ENCODE measurements at regions of chr16 and their contacts with region 1.

Region 1: DNA sequence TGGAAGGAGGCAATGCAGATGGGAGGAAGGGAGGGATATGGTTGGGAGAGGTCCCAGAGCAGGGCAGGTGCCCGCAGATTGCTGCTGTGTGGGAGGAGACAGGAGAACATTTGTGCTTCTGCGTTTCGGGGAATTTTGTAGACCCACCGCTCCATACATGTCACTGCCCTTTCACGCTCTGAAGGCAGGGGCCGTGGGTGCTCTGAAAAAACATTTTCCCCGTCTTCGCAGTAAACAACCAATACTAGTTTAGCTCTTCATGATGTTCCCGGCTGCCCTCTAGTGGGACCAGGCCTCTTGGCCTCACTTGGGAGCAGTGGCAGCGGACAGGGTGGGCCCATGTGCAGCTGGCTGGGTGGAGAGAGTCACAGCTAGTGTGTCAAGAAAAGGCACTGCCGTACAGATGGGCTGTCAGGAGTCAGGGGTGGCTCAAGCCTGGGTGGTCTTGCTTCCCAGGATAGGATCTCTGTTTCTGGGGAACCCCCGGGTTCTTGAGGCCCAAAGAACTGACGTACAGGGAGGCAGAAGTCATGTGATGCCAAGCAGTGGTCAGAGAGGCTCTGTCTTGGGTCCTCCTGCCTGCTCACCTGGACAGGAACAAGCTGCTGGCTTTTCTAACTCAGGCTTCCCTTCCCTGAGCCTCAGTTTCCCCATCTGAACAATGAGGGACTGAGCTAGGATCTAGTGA is 46.5 kb upstream of the CPNE2 start:
- DNase-seq: peak; percentile 71
- ATAC-seq: peak; percentile 95
- H3K4me3 ChIP-seq: peak overlapping the region in 1 of 3 experiments; percentile 59; a peak in 3 of 6 replicates
- H3K27ac ChIP-seq: no peak overlapping the region
- H3K4me1 ChIP-seq: peaks cover 13% of the 10 kb centered on the region
- H3K27me3 ChIP-seq: no peaks in the 10 kb centered on the region; a peak in 2 of 5 replicates
- CTCF ChIP-seq: peak; percentile 95
- EP300 ChIP-seq: no peak
- POLR2A ChIP-seq: no peak
- RAD21 ChIP-seq: peak; percentile 83

Region 2: DNA sequence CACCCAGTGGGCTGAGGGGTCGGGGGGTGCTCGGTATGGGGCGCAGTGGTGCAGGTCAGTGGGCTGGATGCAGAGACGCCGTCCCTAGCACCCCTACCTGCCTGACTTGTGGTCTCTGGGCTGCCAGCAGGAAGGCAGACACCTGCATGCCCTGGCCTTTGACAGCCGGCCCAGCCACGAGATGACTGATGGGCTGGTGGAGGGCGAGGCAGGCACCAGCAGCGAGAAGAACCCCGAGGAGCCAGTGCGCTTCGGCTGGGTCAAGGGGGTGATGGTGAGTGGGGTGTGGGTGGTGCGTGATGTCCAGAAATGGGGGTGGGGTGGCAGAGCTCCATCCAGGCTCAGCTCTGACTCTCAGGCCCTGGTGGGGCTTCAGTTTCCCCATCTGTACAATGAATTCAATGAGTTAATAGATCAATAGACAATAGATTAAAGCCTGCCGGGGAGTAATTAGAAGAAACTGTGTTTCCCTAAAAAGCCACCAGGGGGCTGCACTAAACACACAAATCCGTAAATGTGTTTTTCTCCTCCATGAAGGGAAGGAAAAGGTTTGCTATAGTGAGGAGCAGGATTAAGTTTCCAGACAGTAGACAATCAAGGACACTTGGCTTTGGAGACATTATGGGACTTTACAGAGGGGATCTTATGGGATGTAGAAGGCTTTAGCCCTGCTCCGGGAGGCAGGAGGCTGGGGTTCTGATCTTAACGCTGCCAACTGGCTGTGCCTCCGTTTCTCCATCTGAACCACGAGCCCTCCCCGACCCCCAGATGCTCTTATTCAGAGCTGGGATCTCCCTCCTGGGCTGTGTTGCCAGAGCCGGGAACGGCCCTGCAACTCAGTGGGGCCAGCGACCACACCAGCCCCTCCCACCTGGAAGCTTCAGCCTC is 178.7 kb before region 1 on chr16:
- CTCF ChIA-PET with region 1: no interaction called
- POLR2A ChIA-PET with region 1: no interaction called
- in situ Hi-C with region 1: no loop called
- intact Hi-C with region 1: loop called (anchors 1 kb)
- DNase-seq: peak; percentile 70
- ATAC-seq: peak; percentile 6; the same call in 1 of the 3 replicates
- H3K4me3 ChIP-seq: peak overlapping the region in 2 of 3 experiments; percentile 29 to 50; a peak in 4 of 6 replicates
- H3K27ac ChIP-seq: no peak overlapping the region
- H3K4me1 ChIP-seq: peaks cover 56% of the 10 kb centered on the region
- H3K27me3 ChIP-seq: no peaks in the 10 kb centered on the region
- CTCF ChIP-seq: peak; percentile 74
- EP300 ChIP-seq: no peak
- POLR2A ChIP-seq: no peak
- RAD21 ChIP-seq: peak; percentile 59

Region 3: DNA sequence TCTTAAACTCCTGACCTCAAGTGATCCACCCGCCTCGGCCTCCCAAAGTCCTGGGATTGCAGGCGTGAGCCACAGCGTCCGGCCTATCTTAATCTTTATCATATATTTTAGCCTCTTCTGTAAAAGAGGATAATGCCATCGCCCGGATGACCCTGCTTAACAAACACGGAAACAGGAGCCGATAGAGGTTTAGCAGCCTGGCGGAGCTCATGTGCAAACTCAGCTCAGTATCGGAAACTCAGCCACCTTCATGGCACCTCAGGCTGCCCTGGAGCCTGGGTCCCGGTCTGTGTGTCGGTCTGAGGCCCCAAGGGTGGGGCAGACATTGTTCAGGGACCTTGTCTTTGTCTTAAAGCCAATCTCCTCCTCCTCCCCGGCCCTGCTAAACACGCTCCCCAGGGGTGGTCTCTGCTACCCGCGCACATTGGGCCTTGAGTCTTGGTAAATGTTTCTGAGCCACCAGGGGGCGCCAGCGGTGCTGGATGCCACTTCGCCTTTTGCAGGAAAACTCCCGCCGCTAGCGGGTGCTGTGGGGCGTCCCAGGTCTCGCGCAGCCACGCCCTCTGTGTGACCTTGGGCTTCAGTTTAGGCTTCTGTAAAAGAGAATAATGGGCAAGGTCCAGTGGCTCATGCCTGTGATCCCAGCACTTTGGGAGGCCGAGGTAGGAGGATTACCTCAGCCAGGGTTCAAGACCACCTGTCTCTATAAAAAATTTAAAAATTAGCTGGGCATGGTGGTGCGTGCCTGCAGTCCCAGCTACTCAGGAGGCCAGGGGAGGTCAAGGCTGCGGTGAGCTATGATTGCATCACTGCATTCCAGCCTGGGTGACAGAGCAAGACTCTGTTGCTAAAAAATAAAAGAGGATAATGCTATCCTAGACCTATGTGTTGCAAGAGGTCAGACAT is 81.3 kb before region 1 on chr16:
- CTCF ChIA-PET with region 1: interaction called, 38 read pairs
- POLR2A ChIA-PET with region 1: no interaction called
- in situ Hi-C with region 1: no loop called
- intact Hi-C with region 1: loop called (anchors 1 kb)
- DNase-seq: peak; percentile 83
- ATAC-seq: peak; percentile 56
- H3K4me3 ChIP-seq: 0 out of 6 replicates have a peak overlapping the region, but pooled peaks of 1 of the 3 experiments have one; percentile 17
- H3K27ac ChIP-seq: peak overlapping the region; percentile 51
- H3K4me1 ChIP-seq: peaks cover 76% of the 10 kb centered on the region
- H3K27me3 ChIP-seq: peaks cover 2 to 13% of the 10 kb centered on the region in 2 experiments; a peak in 3 of 5 replicates
- CTCF ChIP-seq: peak; percentile 96
- EP300 ChIP-seq: peak; percentile 83 to 86
- POLR2A ChIP-seq: no peak
- RAD21 ChIP-seq: peak; percentile 94

Measured in HepG2 (cell line).